ENCODE measurements at regions of chr1 and their contacts with region 1.

Region 1: DNA sequence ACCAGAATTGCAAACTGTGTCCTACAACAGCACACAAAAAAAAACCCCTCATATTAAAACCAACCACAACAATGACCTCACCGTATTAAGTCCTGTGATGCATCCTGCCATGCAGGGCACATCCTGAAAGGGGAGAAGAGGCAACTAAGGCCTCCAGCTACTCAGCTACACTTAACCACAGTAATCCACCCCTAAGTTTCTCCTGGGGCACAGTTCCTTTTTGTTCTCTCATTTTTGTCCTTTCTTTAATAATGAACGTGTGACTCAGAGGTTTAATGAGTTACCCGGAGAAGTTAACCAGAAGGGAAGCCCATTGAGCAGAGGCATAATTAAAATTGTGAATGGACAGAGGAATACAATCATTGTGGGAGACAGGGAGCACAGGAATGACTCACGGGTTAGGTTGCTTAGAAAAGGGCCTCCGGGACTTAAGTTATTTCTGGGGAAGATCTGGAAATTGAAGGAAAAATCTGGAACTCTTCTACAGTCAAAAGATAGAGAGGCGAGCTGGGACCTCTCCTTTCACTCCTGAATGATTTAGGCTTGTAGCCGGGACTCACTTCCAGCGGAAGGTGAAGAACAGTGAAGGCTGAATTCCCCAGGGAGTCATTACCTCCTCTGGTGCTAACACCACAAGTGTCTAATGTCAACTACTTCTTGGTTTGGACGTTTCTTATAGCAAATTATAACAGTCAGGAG is 36.9 kb upstream of the HIVEP3 start:
- DNase-seq: no peak
- ATAC-seq: no peak
- H3K4me3 ChIP-seq: no peak overlapping the region
- H3K27ac ChIP-seq: no peak overlapping the region
- H3K4me1 ChIP-seq: peaks cover 19% of the 10 kb centered on the region
- H3K27me3 ChIP-seq: no peaks in the 10 kb centered on the region
- CTCF ChIP-seq: no peak

Region 2: DNA sequence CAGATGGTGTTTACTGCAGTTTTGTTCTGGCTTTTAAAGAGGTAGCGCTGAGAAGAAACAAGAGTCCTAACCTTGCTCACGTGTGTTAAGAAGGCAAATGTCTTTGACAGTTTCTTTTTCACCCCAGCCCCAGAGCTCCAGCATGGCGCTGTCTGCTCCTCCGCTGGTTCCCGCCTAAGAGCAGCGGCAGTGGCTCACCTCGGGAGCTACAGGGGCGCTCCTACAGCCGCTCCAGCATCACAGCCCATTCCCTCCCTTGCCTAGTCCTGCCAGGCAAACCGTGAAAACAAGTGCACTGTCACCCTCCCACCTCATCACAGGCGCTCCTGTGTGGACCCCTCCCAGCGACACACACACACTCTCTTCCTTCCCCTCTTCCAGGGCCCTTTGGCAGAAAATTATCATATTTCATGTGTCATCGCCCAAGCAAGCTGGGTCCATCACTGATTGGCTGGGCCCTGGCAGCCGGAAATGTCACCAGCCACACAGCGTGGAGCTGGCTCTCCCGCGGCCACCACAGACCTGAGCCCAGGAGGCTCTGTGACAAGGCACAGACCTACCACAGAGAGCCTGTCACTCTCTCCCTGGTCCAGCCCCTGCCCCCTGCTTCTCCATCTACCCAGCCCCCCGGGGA is 35.7 kb before region 1 on chr1:
- intact Hi-C with region 1: loop called in 1 of 2 experiments (anchors 2 kb)
- DNase-seq: peak; percentile 63 to 86
- ATAC-seq: peak; percentile 90 to 96 (median 94)
- H3K4me3 ChIP-seq: peak overlapping the region; percentile 80
- H3K27ac ChIP-seq: peak overlapping the region; percentile 87
- H3K4me1 ChIP-seq: peaks cover 29% of the 10 kb centered on the region
- H3K27me3 ChIP-seq: no peaks in the 10 kb centered on the region
- CTCF ChIP-seq: no peak

Region 3: GRCh38 chr1:41935226-41935625 is 20.4 kb before region 1 on chr1:
- intact Hi-C with region 1: no loop called
- DNase-seq: no peak
- ATAC-seq: no peak
- H3K4me3 ChIP-seq: no peak overlapping the region
- H3K27ac ChIP-seq: no peak overlapping the region
- H3K4me1 ChIP-seq: no peaks in the 10 kb centered on the region
- H3K27me3 ChIP-seq: no peaks in the 10 kb centered on the region
- CTCF ChIP-seq: no peak

Region 4: GRCh38 chr1:41980827-41981653 is 25.4 kb after region 1 on chr1:
- intact Hi-C with region 1: loop called in 1 of 2 experiments (anchors 1 kb)
- DNase-seq: no peak
- ATAC-seq: no peak
- H3K4me3 ChIP-seq: no peak overlapping the region
- H3K27ac ChIP-seq: no peak overlapping the region
- H3K4me1 ChIP-seq: no peaks in the 10 kb centered on the region
- H3K27me3 ChIP-seq: no peaks in the 10 kb centered on the region
- CTCF ChIP-seq: no peak